ENCODE measurements at regions of chr6 and their contacts with region 1.

Region 1: DNA sequence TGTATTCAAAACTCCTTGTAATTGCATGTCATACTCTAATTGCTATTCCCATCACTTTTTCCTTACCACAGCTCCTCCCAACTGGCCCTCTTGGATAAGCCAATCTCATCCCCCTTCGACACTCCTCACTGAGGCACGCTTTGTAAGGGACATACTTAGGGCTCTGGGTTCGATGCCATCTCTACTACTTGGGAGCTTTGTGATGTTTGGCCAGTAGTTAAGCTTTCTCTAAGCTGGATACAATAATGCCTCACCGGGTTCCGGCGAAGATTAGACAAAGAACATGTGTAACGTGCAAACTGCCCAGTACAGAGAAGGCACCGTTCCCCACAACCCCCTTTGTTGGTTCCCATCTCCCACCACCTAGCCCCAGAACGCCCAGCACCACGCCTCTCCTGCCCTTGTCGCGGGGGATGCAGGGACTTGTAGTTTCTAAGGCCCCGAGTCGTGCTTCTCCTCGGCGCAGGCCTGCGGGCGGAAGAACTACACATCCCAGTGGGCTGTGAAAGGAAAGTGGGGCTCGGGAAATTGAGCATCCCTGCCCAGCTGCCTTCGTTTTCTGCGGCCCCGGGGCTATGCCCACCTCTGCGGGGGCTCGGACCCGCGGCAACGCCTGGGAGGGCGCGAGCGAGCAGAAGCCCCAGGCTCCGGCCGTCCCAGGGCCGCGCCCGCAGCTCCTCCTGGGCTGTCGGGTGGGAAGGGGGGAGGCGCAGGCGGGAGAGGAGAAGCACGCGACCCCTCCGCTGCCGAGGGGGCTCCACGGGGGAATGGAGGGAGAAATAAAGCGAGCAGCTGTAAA is 1.1 kb upstream of the ZDHHC14 start:
- DNase-seq: peak; percentile 88 to 93 (median 91)
- ATAC-seq: peak; percentile 77
- H3K4me3 ChIP-seq: peak overlapping the region; percentile 81 to 100
- H3K27ac ChIP-seq: peak overlapping the region; percentile 68 to 96 (median 93)
- H3K4me1 ChIP-seq: peaks cover 14% of the 10 kb centered on the region
- H3K27me3 ChIP-seq: no peaks in the 10 kb centered on the region
- CTCF ChIP-seq: no peak
- POLR2A ChIP-seq: no peak

Region 2: DNA sequence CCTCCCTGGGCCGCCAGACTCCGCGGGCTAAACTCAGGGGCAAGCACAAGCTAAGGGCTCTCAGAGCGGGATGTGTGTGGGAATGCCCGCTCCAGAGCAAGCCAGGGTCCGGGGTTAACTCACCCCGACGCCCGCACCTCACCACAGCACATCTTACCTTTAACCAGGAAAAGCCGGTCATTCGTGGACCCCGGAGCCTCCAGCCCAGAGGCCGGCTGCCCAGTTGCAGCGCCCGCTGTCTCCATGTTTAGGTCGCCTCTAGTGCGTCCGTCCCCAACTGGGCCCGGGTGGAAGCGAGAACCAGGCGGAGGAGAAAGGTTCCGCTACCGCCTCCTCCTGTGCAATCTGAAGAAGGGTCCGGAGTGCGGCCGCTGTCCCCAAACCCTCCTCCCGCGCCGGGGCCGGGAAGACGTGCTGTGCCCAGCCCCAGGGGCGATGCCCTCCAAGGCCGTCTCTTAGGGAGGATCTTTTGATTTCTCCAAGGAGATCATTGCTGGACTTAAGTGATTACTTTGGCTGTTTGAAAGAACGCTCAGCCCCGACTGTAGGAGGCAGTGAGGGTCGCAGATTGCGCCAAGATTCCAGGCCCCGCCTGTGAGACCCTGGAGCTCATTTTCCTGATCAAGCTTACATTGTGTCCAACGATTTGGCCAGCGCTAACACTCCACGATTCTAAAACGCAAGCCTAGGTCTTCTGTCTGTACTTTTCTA is 56.4 kb before region 1 on chr6 and contains the start of gene TMEM242:
- intact Hi-C with region 1: loop called (anchors 10 kb)
- DNase-seq: peak; percentile 92 to 94 (median 94)
- ATAC-seq: peak; percentile 96
- H3K4me3 ChIP-seq: peak within 1 kb of the TSS; percentile 26 to 61
- H3K27ac ChIP-seq: peak within 1 kb of the TSS; percentile 83 to 94 (median 90)
- H3K4me1 ChIP-seq: peaks cover 13% of the 10 kb centered on the region
- H3K27me3 ChIP-seq: no peaks in the 10 kb centered on the region
- CTCF ChIP-seq: peak in 6 of 7 experiments; percentile 4 to 49 (median 40)
- POLR2A ChIP-seq: peak; percentile 83 to 96 (median 95)
- total RNA-seq, gene TMEM242: 1.6 to 6.2 TPM